IMR-90 (cell line): ENCODE measurements at regions of chr5 and their contacts with region 1.

Region 1: GRCh38 chr5:80093796-80094195 is 58.6 kb downstream of the THBS4 start:
- DNase-seq: no peak
- ATAC-seq: no peak
- H3K4me3 ChIP-seq: no peak overlapping the region
- H3K27ac ChIP-seq: no peak overlapping the region
- H3K4me1 ChIP-seq: no peaks in the 10 kb centered on the region; the same call in 1 of the 2 replicates
- H3K27me3 ChIP-seq: no peaks in the 10 kb centered on the region; the same call in 1 of the 2 replicates
- CTCF ChIP-seq: no peak
- POLR2A ChIP-seq: no peak
- RAD21 ChIP-seq: no peak

Region 2: DNA sequence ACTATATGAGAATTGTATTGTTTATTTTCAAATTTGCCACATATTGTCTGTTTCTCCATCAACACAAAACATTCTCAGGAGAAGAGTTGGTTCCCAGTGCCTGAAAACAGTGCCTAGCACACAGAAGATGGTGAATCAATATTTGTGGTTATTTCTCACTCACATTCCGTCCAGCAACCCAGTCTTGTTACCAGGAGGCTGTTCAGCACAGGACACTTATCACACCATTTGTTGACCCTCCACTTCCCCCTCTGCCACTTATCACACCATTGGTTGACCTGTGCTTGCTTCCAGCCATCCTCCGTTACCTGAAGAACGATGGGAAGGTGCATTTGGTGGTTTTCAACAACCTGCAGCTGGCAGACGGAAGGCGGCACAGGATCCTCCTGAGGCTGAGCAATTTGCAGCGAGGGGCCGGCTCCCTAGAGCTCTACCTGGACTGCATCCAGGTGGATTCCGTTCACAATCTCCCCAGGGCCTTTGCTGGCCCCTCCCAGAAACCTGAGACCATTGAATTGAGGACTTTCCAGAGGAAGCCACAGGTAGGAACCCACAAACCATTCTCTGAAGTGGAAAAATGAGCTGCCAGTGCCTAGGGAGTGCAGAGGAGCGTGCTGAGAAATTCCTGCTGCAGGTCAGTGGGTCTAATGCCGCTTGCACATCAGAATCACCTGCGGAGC is 38.2 kb before region 1 on chr5:
- CTCF ChIA-PET with region 1: no interaction called
- POLR2A ChIA-PET with region 1: no interaction called
- dilution Hi-C with region 1: no loop called
- in situ Hi-C with region 1: no loop called
- intact Hi-C with region 1: no loop called
- DNase-seq: no peak
- ATAC-seq: no peak
- H3K4me3 ChIP-seq: no peak overlapping the region
- H3K27ac ChIP-seq: no peak overlapping the region
- H3K4me1 ChIP-seq: no peaks in the 10 kb centered on the region
- H3K27me3 ChIP-seq: peaks cover 5% of the 10 kb centered on the region
- CTCF ChIP-seq: no peak
- POLR2A ChIP-seq: no peak
- RAD21 ChIP-seq: no peak

Region 3: GRCh38 chr5:80255732-80256479 is 162.1 kb after region 1 on chr5 and contains the start of gene SERINC5:
- CTCF ChIA-PET with region 1: interaction called, 4 read pairs
- POLR2A ChIA-PET with region 1: no interaction called
- dilution Hi-C with region 1: no loop called
- in situ Hi-C with region 1: no loop called
- intact Hi-C with region 1: loop called (anchors 5 kb)
- DNase-seq: peak; percentile 68
- ATAC-seq: peak; percentile 91
- H3K4me3 ChIP-seq: peak within 1 kb of the TSS; percentile 73
- H3K27ac ChIP-seq: peak within 1 kb of the TSS; percentile 85
- H3K4me1 ChIP-seq: peaks cover 3% of the 10 kb centered on the region
- H3K27me3 ChIP-seq: no peaks in the 10 kb centered on the region
- CTCF ChIP-seq: no peak
- POLR2A ChIP-seq: peak; percentile 88
- RAD21 ChIP-seq: no peak
- total RNA-seq, gene SERINC5: 7.2 and 8.1 TPM in 2 replicates

Region 4: GRCh38 chr5:80275347-80275746 is 181.6 kb after region 1 on chr5:
- CTCF ChIA-PET with region 1: interaction called, 3 read pairs
- POLR2A ChIA-PET with region 1: no interaction called
- dilution Hi-C with region 1: no loop called
- in situ Hi-C with region 1: no loop called
- intact Hi-C with region 1: loop called (anchors 1 kb)
- DNase-seq: peak; percentile 21
- ATAC-seq: no peak
- H3K4me3 ChIP-seq: no peak overlapping the region
- H3K27ac ChIP-seq: no peak overlapping the region
- H3K4me1 ChIP-seq: no peaks in the 10 kb centered on the region
- H3K27me3 ChIP-seq: no peaks in the 10 kb centered on the region; the same call in 1 of the 2 replicates
- CTCF ChIP-seq: peak; percentile 43
- POLR2A ChIP-seq: no peak
- RAD21 ChIP-seq: peak; percentile 61

Region 5: GRCh38 chr5:80308526-80308925 is 214.7 kb after region 1 on chr5:
- CTCF ChIA-PET with region 1: interaction called, 37 read pairs
- POLR2A ChIA-PET with region 1: no interaction called
- dilution Hi-C with region 1: no loop called
- in situ Hi-C with region 1: loop called (anchors 5 kb)
- intact Hi-C with region 1: loop called (anchors 1 kb)
- DNase-seq: no peak
- ATAC-seq: no peak
- H3K4me3 ChIP-seq: no peak overlapping the region
- H3K27ac ChIP-seq: no peak overlapping the region
- H3K4me1 ChIP-seq: no peaks in the 10 kb centered on the region
- H3K27me3 ChIP-seq: no peaks in the 10 kb centered on the region
- CTCF ChIP-seq: no peak
- POLR2A ChIP-seq: no peak
- RAD21 ChIP-seq: no peak

Region 6: GRCh38 chr5:80407735-80408482 is 314.1 kb after region 1 on chr5 and contains the start of gene ZFYVE16:
- CTCF ChIA-PET with region 1: no interaction called
- POLR2A ChIA-PET with region 1: no interaction called
- dilution Hi-C with region 1: no loop called
- in situ Hi-C with region 1: no loop called
- intact Hi-C with region 1: loop called (anchors 5 kb)
- DNase-seq: peak; percentile 96
- ATAC-seq: peak; percentile 93
- H3K4me3 ChIP-seq: peak within 1 kb of the TSS; percentile 75
- H3K27ac ChIP-seq: peak within 1 kb of the TSS; percentile 80
- H3K4me1 ChIP-seq: peaks cover 3% of the 10 kb centered on the region; the same call in 1 of the 2 replicates
- H3K27me3 ChIP-seq: no peaks in the 10 kb centered on the region
- CTCF ChIP-seq: peak; percentile 30; the same call in 1 of the 2 replicates
- POLR2A ChIP-seq: peak; percentile 89
- RAD21 ChIP-seq: 0 out of 2 replicates have a peak, but pooled peaks have one; percentile 8
- total RNA-seq, gene ZFYVE16: 11.1 and 19.4 TPM in 2 replicates

Region 7: GRCh38 chr5:80672140-80672736 is 578.4 kb after region 1 on chr5:
- CTCF ChIA-PET with region 1: no interaction called
- POLR2A ChIA-PET with region 1: no interaction called
- dilution Hi-C with region 1: no loop called
- in situ Hi-C with region 1: loop called (anchors 10 kb)
- intact Hi-C with region 1: loop called (anchors 5 kb)
- DNase-seq: peak; percentile 72
- ATAC-seq: peak; percentile 93
- H3K4me3 ChIP-seq: no peak overlapping the region
- H3K27ac ChIP-seq: no peak overlapping the region
- H3K4me1 ChIP-seq: no peaks in the 10 kb centered on the region; the same call in 1 of the 2 replicates
- H3K27me3 ChIP-seq: no peaks in the 10 kb centered on the region
- CTCF ChIP-seq: peak; percentile 76
- POLR2A ChIP-seq: no peak
- RAD21 ChIP-seq: peak; percentile 73